Activated CD8-positive, alpha-beta T cell treated with anti-CD3 and anti-CD28 coated beads for 36 hours (primary cell): ENCODE measurements at regions of chr15 and their contacts with region 1.

Region 1: DNA sequence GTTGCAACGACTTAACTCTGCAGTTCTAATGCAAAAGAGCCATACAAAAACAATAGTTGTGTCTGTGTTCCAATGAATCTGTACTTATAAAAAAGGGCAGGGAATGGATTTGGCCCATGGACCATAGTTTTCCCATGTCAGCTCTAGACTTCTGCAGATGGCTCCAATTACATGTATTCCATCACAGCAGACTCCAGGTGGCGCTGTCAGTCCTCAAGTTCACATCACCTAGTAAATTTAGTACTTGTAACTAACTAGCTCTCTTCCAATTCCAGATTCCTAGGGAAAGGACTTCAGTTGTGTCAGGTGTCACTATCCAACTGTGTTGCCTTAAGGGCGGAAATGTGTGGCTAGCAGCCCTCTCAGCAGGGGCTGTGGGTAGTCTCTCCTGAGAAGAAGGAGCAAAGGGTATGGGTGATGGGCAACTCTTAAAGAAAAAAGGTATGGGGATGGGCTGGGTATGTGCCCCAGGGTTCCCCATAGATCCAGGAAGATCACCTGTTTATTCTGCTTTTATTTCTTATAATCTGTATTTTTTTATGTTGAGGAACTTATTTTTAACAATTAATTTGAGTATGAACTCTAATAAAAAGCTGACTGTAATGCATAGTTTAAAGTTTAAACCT is 36.2 kb downstream of the BBS4 start:
- DNase-seq: peak; percentile 81
- ATAC-seq: peak; percentile 65
- H3K4me3 Mint-ChIP-seq: no peak overlapping the region
- H3K27ac Mint-ChIP-seq: no peak overlapping the region
- H3K4me1 Mint-ChIP-seq: no peaks in the 10 kb centered on the region
- H3K27me3 Mint-ChIP-seq: no peaks in the 10 kb centered on the region
- CTCF ChIP-seq: peak; percentile 81

Region 2: GRCh38 chr15:72616491-72617210 is 105.5 kb before region 1 on chr15:
- CTCF ChIA-PET with region 1: no interaction called
- POLR2A ChIA-PET with region 1: no interaction called
- intact Hi-C with region 1: no loop called
- DNase-seq: no peak
- ATAC-seq: no peak
- H3K4me3 Mint-ChIP-seq: no peak overlapping the region
- H3K27ac Mint-ChIP-seq: no peak overlapping the region
- H3K4me1 Mint-ChIP-seq: peaks cover 11% of the 10 kb centered on the region
- H3K27me3 Mint-ChIP-seq: no peaks in the 10 kb centered on the region
- CTCF ChIP-seq: no peak

Region 3: DNA sequence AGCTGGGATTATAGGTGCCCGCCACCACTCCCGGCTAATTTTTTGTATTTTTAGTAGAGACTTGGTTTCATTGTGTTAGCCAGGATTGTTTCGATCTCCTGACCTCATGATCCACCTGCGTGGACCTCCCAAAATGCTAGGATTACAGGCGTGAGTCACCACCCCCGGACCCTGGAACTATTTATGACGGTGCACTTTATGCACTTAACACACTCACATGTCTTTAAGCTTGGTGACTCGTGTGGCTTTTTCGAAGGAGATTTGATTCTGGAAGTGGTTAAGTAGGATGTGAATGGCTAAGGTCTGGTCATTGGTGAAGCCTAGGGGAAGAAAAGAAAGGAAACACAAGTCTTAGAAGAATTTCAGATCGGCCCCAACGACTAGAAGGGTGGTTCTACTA is 15.9 kb before region 1 on chr15:
- CTCF ChIA-PET with region 1: interaction called, 18 read pairs
- POLR2A ChIA-PET with region 1: no interaction called
- intact Hi-C with region 1: no loop called
- DNase-seq: no peak
- ATAC-seq: no peak
- H3K4me3 Mint-ChIP-seq: no peak overlapping the region
- H3K27ac Mint-ChIP-seq: no peak overlapping the region
- H3K4me1 Mint-ChIP-seq: peaks cover 2% of the 10 kb centered on the region
- H3K27me3 Mint-ChIP-seq: no peaks in the 10 kb centered on the region
- CTCF ChIP-seq: no peak

Region 4: GRCh38 chr15:72740219-72740618 is 18.0 kb after region 1 on chr15:
- CTCF ChIA-PET with region 1: interaction called, 69 read pairs
- POLR2A ChIA-PET with region 1: no interaction called
- intact Hi-C with region 1: no loop called
- DNase-seq: no peak
- ATAC-seq: peak; percentile 85
- H3K4me3 Mint-ChIP-seq: no peak overlapping the region
- H3K27ac Mint-ChIP-seq: peak overlapping the region; percentile 76
- H3K4me1 Mint-ChIP-seq: peaks cover 21% of the 10 kb centered on the region
- H3K27me3 Mint-ChIP-seq: no peaks in the 10 kb centered on the region
- CTCF ChIP-seq: no peak

Region 5: DNA sequence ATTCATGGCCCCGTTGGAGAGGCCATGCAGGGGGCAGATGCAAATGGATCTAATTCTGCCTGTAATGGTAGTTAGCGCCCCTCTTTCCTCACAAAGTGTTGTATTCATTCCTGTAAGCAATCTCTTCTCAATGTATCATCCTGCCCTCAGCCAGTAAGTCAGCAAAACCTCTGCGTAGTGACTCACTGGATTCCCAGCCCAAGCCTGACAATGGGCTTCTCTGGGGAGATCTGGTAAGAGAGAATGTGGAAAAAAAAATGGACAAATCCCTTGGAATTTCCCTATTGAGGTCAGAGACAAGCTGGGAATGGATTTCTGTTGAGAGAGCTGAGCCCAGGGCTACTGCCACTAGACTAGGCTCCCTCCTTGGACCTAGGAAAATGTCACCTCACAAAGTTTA is 36.0 kb after region 1 on chr15:
- CTCF ChIA-PET with region 1: interaction called, 21 read pairs
- POLR2A ChIA-PET with region 1: no interaction called
- intact Hi-C with region 1: no loop called
- DNase-seq: no peak
- ATAC-seq: no peak
- H3K4me3 Mint-ChIP-seq: no peak overlapping the region
- H3K27ac Mint-ChIP-seq: no peak overlapping the region
- H3K4me1 Mint-ChIP-seq: peaks cover 7% of the 10 kb centered on the region
- H3K27me3 Mint-ChIP-seq: no peaks in the 10 kb centered on the region
- CTCF ChIP-seq: no peak

Region 6: DNA sequence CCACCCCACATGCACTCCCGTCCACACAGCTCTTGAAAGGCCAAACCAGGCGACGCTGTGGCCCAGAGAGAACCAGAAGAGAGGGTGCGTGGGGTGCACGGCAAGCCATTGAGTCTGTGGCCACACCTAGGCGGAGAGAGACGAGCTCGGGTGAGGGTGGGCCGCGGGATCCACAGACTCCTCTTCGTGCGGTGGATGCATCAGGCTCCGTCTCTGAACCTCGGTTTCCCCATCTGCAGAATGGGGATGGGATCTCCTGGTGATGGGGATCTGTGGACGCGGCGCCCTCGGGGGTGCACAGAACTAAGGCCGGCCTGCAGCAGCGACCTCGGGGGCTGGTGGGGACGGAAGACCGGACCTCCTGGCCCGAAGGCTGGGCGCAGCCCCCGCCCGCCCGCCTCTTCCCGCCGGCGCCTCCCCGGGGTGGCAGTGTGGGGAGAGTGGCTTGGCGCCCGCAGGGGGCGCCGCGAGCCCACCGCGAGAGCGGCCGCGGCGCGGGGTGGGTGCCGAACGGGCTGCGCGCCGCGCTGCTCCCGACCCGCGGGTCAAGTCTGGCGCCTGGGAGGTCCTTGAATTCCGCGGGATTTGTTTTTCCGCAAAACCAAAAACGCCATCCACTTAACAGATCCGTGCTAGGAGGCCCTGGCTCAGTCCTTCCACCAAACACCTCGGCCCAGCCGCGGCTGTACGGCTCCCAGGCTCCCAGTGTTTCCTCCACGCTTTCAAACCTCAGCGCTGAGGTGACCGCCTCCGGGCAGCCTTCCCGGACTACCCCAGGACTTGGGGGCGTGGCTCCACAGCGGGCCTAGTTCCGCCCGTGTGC is 74.5 kb after region 1 on chr15:
- CTCF ChIA-PET with region 1: interaction called, 10 read pairs
- POLR2A ChIA-PET with region 1: no interaction called
- intact Hi-C with region 1: no loop called
- DNase-seq: peak; percentile 33
- ATAC-seq: peak; percentile 84
- H3K4me3 Mint-ChIP-seq: peak overlapping the region; percentile 72
- H3K27ac Mint-ChIP-seq: no peak overlapping the region
- H3K4me1 Mint-ChIP-seq: peaks cover 9% of the 10 kb centered on the region
- H3K27me3 Mint-ChIP-seq: peaks cover 39% of the 10 kb centered on the region
- CTCF ChIP-seq: peak; percentile 65

Region 7: DNA sequence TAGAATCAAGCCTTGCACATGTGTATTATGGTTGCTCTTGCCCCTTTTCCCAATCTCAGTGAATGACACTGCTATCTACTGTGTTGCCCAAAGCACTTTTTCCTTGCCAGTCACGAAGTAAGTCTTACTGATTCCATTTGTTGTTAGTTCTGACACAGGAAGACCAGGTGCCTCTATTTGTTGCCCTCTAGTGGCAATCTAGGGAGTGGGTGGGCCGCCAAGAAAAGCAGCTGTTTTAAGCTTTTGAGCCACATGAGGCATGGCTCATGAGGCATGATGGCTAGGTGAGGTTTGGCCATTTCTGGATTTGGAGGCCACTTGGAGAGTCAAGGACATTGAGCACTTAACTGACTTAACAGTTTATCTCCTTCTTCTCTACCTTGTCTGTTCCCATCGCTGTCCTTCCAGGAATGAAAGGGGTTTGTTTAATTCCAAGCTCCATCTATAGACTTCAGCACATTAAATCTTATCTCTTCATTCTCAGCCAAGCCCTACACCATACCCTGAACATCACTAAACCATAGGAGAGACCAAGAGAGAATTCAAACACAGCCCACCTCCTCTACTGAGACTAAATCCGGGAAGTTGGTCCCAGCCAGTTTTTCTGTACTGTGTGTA is 543.5 kb after region 1 on chr15:
- CTCF ChIA-PET with region 1: interaction called, 13 read pairs
- POLR2A ChIA-PET with region 1: no interaction called
- intact Hi-C with region 1: no loop called
- DNase-seq: peak; percentile 72
- ATAC-seq: peak; percentile 82
- H3K4me3 Mint-ChIP-seq: no peak overlapping the region
- H3K27ac Mint-ChIP-seq: no peak overlapping the region
- H3K4me1 Mint-ChIP-seq: no peaks in the 10 kb centered on the region
- H3K27me3 Mint-ChIP-seq: peaks cover 1% of the 10 kb centered on the region
- CTCF ChIP-seq: peak; percentile 67